Heart right ventricle (tissue), 16 donors: ENCODE measurements at regions of chr3 and their contacts with region 1.

Region 1: DNA sequence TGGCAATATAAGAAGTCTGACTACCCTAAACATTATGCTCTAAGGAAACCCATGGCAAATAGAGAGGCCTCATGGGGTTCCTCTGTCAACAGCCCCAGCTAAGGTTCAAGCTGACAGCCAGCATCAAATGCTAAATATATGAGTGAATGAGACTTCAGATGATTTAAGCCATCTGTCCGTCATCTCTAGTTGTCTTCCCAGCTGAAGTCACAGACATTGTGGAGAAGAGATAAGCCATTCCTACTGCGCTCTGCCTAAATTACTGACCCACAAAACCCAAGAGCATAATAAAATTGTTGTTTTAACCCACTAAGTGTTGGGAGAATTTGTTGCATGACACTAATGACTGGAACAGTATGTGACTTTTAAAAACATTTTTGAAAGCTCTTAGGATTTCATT is 87.3 kb upstream of the IGSF10 start:
- DNase-seq: no peak
- ATAC-seq: peak in 6 of 8 donors; percentile 28 to 83 (median 74)
- H3K4me3 ChIP-seq: no peak overlapping the region
- H3K27ac ChIP-seq: peak overlapping the region in 3 of 10 donors; percentile 13 to 44 (median 25)
- H3K4me1 ChIP-seq: peaks cover 0 to 18% (median 0%) of the 10 kb centered on the region in 9 donors
- H3K27me3 ChIP-seq: no peaks in the 10 kb centered on the region
- CTCF ChIP-seq: no peak

Region 2: GRCh38 chr3:151477591-151478334 is 70.4 kb before region 1 on chr3:
- intact Hi-C with region 1: no loop called
- DNase-seq: no peak
- ATAC-seq: no peak
- H3K4me3 ChIP-seq: no peak overlapping the region
- H3K27ac ChIP-seq: no peak overlapping the region
- H3K4me1 ChIP-seq: peaks cover 0 to 6% (median 0%) of the 10 kb centered on the region in 9 donors
- H3K27me3 ChIP-seq: no peaks in the 10 kb centered on the region
- CTCF ChIP-seq: no peak

Region 3: DNA sequence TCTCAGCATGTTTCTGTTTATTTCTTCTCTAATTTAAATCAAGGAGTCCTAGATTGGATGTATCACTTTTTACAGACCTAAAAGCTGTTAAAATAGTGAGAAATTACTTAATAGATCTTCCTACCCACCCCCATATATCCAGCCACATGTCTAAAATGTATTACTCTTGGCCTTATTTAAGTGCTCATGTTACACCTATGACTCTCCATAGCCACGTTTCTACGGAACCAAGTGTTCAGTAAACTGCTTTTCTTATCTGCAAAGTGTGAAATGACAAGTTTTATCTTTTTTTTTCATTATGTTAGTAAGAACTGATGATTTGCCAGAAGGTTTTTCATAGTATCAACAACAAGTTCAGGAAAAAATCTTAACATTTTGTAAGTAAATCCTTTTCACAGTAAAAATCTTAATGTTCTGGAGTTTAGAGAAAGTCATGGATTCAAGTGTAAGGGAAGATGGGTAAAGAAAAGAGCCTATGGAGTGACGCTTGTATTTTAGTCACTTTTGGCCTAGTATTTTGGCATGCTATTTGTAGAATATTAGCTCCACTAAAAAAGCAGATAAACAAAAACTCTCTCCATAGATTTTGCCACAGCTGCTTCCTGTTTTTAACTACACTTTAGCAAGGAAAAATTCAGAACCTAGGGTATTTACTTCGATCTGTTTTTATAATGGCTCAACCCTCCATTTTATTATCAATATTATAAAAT is 46.1 kb before region 1 on chr3:
- intact Hi-C with region 1: loop called in 1 of 10 experiments (anchors 5 kb)
- DNase-seq: no peak
- ATAC-seq: peak in 5 of 8 donors; percentile 53 to 70 (median 68)
- H3K4me3 ChIP-seq: no peak overlapping the region
- H3K27ac ChIP-seq: peak overlapping the region in 7 of 10 donors; percentile 26 to 72 (median 49)
- H3K4me1 ChIP-seq: peaks cover 0 to 6% (median 0%) of the 10 kb centered on the region in 9 donors
- H3K27me3 ChIP-seq: no peaks in the 10 kb centered on the region
- CTCF ChIP-seq: no peak

Region 4: DNA sequence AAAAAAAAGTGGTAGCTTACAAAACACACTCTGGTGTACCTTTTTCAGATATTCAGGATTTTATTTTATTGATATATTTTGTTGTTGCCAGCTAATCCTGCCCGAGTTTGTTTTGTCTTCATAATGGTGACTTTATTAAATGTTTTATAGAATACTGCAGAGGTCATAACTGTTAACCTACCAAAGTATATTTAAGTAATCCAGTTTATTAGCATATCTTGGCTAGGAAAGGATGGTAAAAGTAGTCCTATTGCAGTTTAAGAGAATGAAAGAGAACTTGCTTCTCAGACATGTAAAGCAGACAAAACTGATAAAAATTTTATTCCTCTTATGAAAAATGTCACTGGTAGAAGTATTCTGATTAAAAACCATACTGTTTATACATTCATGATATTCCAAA is 28.1 kb before region 1 on chr3:
- intact Hi-C with region 1: no loop called
- DNase-seq: no peak
- ATAC-seq: no peak
- H3K4me3 ChIP-seq: no peak overlapping the region
- H3K27ac ChIP-seq: no peak overlapping the region
- H3K4me1 ChIP-seq: no peaks in the 10 kb centered on the region
- H3K27me3 ChIP-seq: no peaks in the 10 kb centered on the region
- CTCF ChIP-seq: no peak

Region 5: DNA sequence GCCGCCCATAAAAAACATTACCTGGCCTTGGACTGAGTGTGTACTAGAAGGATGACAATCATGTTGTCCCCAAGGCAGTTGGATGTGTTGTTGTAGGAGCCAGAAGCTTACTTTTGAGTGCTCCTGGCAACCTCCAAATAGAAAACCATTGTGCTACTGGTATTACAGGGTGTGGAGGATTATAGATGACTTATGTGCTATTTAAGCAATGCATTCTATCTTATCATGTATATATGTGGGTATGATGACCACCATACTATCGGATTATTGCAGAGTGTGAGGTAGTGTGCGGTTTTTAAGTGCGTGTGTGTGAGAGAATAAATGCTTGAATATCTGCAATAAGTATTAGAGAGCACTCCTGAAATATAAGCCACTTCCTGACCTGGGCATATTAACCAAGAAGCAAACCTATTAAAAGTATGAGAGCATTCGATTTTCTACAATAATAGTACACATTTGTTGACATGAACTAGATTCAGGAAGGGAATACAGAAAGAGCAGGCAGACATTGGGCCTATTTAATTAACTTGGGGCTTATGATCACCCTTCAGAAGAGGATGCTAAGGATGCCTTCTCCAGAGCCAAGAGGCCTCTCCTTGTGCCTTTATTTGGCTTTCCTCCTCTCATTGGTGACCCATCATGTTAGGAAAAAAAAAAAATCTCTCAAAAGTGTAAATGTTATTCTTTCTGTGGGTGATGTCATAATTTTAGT is 708.8 kb after region 1 on chr3:
- intact Hi-C with region 1: no loop called
- DNase-seq: no peak
- ATAC-seq: no peak
- H3K4me3 ChIP-seq: no peak overlapping the region
- H3K27ac ChIP-seq: peak overlapping the region in 1 of 10 donors; percentile 76
- H3K4me1 ChIP-seq: peaks cover 0 to 81% (median 16%) of the 10 kb centered on the region in 9 donors
- H3K27me3 ChIP-seq: no peaks in the 10 kb centered on the region
- CTCF ChIP-seq: no peak